Mammary epithelial cell (primary cell): ENCODE measurements at regions of chr2 and their contacts with region 1.

Region 1: GRCh38 chr2:6896930-6897759 is 19.6 kb downstream of the RSAD2 start:
- DNase-seq: no peak
- H3K4me3 ChIP-seq: no peak overlapping the region
- H3K27ac ChIP-seq: no peak overlapping the region
- H3K4me1 ChIP-seq: no peaks in the 10 kb centered on the region
- H3K27me3 ChIP-seq: no peaks in the 10 kb centered on the region
- CTCF ChIP-seq: peak; percentile 43 to 53

Region 2: DNA sequence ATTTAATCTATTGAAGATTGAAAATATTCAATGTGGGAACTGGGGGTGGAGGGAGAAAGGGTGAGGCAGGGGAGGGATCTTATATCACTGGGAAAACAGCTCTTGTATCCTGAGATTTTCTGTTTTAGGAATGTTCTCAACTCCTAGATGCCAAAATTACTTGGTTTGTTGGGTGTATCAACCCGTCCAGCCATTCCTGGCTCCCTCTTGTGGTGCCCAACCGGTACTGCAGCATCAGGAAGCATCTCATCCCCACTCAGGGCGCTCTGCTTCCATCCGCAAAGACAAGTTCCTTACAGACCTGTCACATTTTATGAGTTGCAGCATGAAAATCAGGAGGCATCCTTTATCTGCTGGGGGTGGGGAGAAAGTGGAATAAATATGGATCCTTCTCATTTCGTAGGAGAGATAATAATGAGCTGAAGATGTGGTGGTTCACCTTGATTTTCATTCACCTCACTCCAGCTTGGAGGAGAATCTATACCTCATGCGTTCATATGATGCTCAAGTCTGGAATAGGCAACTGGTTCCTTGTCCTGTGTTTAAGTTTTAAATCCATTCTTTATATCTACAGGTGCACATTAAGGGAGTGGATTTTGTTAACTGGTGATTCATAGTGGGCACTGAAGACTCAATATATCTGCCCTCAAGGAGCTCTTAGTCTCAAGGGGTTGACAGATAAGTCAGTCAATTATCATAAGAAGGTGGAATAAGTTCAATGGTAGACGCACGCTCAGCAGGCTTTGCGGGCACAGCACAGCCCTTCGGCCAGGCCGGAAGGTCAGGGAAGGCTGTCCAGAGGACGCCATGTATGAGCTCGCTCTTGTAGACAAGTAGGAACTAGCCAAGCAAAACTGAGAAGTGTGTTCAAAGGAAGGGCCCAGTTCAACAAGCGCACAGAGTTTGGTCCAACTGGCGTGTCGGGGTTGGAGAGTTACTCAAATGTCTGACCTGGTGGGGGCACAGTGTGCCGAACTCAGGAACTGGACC is 147.4 kb after region 1 on chr2:
- CTCF ChIA-PET with region 1: no interaction called
- dilution Hi-C with region 1: no loop called
- in situ Hi-C with region 1: loop called in 1 of 2 experiments (anchors 10 kb)
- intact Hi-C with region 1: loop called (anchors 1 kb)
- DNase-seq: peak; percentile 21
- H3K4me3 ChIP-seq: no peak overlapping the region
- H3K27ac ChIP-seq: no peak overlapping the region
- H3K4me1 ChIP-seq: no peaks in the 10 kb centered on the region
- H3K27me3 ChIP-seq: no peaks in the 10 kb centered on the region
- CTCF ChIP-seq: peak; percentile 95 to 97

Region 3: DNA sequence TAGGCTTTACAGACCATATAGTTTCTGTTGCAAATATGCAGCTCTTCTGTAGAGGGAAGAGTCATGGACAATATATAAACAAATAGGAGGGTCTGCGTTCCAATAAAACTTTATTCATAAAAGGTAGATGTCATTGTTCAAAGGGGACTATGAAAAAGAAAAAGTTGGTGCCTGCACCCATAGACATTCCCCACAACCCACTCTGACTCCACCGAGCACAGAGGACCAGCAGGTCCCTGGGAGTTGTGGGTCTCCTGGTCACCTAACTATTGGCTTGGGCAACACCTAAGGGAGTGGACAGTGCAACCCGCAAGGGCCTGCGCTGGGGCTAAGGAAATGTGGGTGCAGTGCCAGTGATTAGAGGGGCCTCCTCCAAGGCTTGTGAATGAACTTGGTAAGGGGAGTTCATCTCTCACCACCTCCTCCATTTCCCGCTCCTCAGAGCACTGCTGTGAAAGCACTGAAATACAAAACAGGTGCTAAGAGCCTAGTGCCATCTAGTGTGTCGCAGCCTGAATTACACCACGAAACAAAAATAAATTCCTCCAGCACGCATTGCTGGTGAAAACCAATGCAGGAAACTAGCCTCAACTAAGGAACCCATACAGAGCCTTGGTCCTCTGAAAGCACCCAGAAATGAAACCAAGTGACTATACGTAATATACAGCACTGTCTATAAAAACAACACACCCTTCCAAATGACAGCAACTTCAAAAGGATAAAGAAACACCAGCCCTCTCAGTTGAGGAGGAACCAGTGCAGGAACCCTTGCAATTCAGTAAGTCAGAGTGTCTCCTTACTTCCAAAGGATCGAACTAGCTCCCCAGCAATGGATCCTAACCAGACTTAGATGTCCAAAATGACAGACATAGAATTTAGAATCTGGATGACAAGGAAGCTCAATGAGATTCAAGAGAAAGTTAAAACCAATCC is 186.7 kb after region 1 on chr2:
- CTCF ChIA-PET with region 1: no interaction called
- dilution Hi-C with region 1: no loop called
- in situ Hi-C with region 1: no loop called
- intact Hi-C with region 1: loop called (anchors 2 kb)
- DNase-seq: peak; percentile 19
- H3K4me3 ChIP-seq: no peak overlapping the region
- H3K27ac ChIP-seq: no peak overlapping the region
- H3K4me1 ChIP-seq: no peaks in the 10 kb centered on the region
- H3K27me3 ChIP-seq: no peaks in the 10 kb centered on the region
- CTCF ChIP-seq: peak; percentile 70 to 79

Region 4: DNA sequence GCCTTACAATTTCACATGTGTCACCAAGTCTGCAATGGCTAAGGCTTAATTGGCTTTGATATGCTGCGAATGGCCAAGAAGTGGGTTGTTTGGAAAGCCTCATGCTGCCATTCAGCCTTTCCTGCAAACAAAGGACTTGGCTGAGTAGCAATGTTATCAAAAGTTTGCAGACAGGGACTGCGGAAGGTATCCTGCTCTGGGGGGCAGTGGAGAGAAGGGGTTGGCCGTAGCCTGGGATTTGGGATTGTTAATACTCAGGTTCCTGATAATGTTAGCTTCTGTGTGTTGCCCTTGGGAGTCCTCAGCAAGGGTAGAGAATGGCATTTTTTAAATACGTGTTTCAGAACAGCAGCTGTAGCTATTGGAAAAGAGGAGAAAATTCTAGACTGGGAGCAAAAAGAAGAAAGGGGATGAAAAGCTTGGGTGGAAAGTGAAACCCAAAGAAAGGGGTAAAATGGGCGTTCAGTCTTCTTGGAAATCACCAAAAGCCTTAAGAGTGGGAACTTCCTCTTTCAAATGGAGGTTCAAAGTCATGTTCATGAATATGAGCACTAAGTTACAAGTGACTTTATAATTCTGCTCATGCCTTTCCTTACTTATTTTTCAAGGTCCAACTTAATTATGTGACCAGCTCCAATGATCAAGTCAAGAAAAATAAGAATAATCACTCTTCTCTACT is 345.2 kb after region 1 on chr2:
- CTCF ChIA-PET with region 1: no interaction called
- dilution Hi-C with region 1: no loop called
- in situ Hi-C with region 1: no loop called
- intact Hi-C with region 1: no loop called
- DNase-seq: no peak
- H3K4me3 ChIP-seq: no peak overlapping the region
- H3K27ac ChIP-seq: no peak overlapping the region
- H3K4me1 ChIP-seq: no peaks in the 10 kb centered on the region
- H3K27me3 ChIP-seq: no peaks in the 10 kb centered on the region
- CTCF ChIP-seq: no peak